ENCODE measurements at regions of chr5 and their contacts with region 1.

Region 1: GRCh38 chr5:31193591-31194467 is at the start of gene CDH6:
- DNase-seq: peak; percentile 33
- ATAC-seq: peak; percentile 50
- H3K4me3 ChIP-seq: peak within 1 kb of the TSS; percentile 72
- H3K27ac ChIP-seq: no peak within 1 kb of the TSS
- H3K4me1 ChIP-seq: peaks cover 15% of the 10 kb centered on the region
- H3K27me3 ChIP-seq: peaks cover 51% of the 10 kb centered on the region
- CTCF ChIP-seq: no peak
- total RNA-seq, gene CDH6: 1.8 and 1.9 TPM in 2 replicates

Region 2: DNA sequence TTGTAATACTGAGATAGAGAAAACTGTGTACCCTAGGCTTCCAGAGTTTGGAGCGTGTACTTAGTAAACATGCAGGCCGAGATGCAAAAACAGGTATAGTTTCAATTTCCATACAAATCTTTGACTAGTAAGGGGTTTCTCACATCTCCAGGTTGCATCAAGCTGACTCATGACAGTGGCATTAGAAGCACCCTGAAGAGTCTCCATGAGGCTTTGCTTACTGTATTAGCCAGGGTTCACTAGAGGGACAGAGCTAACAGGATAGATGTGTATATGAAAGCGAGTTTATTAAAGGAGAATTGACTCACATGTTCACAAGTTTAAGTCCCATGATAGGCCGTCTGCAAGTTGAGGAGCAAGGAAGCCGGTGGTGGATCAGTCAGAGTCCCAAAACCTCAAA is 275.7 kb before region 1 on chr5:
- CTCF ChIA-PET with region 1: no interaction called
- POLR2A ChIA-PET with region 1: no interaction called
- intact Hi-C with region 1: loop called (anchors 10 kb)
- DNase-seq: peak; percentile 55
- ATAC-seq: 0 out of 2 replicates have a peak, but pooled peaks have one; percentile 27
- H3K4me3 ChIP-seq: no peak overlapping the region
- H3K27ac ChIP-seq: no peak overlapping the region
- H3K4me1 ChIP-seq: no peaks in the 10 kb centered on the region
- H3K27me3 ChIP-seq: 0 out of 2 replicates have a peak, but pooled peaks cover 3% of the 10 kb centered on the region
- CTCF ChIP-seq: no peak

Region 3: GRCh38 chr5:31049936-31050704 is 143.7 kb before region 1 on chr5:
- CTCF ChIA-PET with region 1: no interaction called
- POLR2A ChIA-PET with region 1: no interaction called
- intact Hi-C with region 1: loop called (anchors 10 kb)
- DNase-seq: peak; percentile 45
- ATAC-seq: peak; percentile 49
- H3K4me3 ChIP-seq: no peak overlapping the region
- H3K27ac ChIP-seq: 0 out of 2 replicates have a peak overlapping the region, but pooled peaks have one; percentile 2
- H3K4me1 ChIP-seq: peaks cover 46% of the 10 kb centered on the region
- H3K27me3 ChIP-seq: no peaks in the 10 kb centered on the region
- CTCF ChIP-seq: no peak